ENCODE measurements at regions of chr2 and their contacts with region 1.

Region 1: DNA sequence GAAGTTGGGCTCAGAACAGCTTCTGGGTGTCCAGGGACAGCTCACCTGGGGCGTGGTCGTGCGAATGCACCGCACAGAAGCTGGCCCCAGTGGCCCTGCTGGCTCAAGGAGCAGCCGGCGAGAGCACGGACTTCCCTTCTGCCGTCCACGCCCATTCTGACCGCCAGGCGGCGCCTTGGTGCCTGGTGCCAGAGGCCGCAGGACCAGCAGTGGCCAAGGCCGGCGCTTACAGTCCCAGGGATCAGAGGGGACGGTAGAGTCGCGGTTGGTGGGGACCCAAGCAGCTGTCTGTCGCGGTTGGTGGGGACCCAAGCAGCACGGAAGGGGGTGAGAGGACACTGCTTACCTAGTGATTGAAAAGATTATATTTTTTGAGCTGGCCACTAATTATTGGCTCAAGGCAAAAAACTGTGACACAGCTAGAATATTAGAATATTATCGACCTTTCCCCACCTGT is 25.7 kb downstream of the NPPC start:
- DNase-seq: peak; percentile 84
- H3K4me3 ChIP-seq: no peak overlapping the region
- H3K27ac ChIP-seq: no peak overlapping the region
- H3K4me1 ChIP-seq: no peaks in the 10 kb centered on the region
- H3K27me3 ChIP-seq: peaks cover 11% of the 10 kb centered on the region
- CTCF ChIP-seq: peak; percentile 58 to 83 (median 75)
- EP300 ChIP-seq: no peak
- POLR2A ChIP-seq: no peak

Region 2: GRCh38 chr2:232315049-232315922 is 414.8 kb after region 1 on chr2:
- in situ Hi-C with region 1: loop called in 3 of 4 experiments (anchors 10 to 25 kb)
- intact Hi-C with region 1: no loop called
- DNase-seq: peak; percentile 56
- H3K4me3 ChIP-seq: no peak overlapping the region
- H3K27ac ChIP-seq: peak overlapping the region; percentile 11 to 60 (median 36)
- H3K4me1 ChIP-seq: peaks cover 0 to 29% (median 10%) of the 10 kb centered on the region in 4 donors
- H3K27me3 ChIP-seq: no peaks in the 10 kb centered on the region
- CTCF ChIP-seq: peak in 1 of 5 experiments; percentile 19
- EP300 ChIP-seq: no peak
- POLR2A ChIP-seq: no peak

Region 3: DNA sequence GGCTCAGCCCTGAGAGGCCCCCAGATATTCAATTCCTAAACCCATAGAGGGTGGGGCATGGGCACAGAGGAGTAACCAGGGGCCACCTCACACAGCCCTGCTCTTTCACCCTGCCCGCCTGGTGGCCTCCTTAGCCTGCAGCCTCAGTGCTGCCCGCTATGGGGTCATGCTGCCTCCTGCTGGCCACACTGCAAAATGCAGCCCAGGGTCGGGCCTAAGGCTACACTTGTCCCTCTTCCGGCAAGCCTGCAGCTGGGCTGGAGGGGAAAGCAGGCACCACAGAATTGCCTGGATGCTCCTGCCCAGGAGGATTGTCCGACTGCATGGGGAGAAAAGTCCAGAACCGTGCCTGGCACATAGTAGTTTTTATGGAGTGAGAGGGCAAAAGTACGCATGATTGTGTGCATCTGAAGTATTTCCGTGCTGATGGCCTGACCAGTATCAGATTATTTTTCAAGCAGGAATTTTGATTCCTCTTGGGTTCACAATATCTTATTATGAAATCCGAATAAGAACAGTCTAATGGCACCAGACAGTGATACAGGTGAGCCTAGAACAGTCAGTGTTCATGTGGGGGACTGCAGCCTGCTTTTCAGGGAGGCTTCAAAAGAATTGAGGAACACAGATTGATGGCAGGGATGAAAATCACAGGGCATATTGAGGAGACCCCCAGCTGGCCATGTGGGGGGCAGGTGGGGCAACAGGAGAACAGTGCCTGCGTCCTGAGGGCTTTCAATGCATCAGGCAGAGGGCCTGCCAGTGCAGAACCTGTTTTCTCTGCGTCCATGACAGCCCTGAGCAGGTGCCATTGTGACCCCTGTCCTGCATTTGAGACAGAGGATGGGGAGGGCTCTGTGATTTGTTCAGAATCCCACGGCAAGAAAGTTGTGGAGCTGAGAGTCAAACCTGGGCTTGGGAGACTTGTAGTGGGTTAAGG is 426.9 kb after region 1 on chr2:
- in situ Hi-C with region 1: loop called in 3 of 4 experiments (anchors 10 to 25 kb)
- intact Hi-C with region 1: no loop called
- DNase-seq: peak; percentile 80
- H3K4me3 ChIP-seq: no peak overlapping the region
- H3K27ac ChIP-seq: no peak overlapping the region
- H3K4me1 ChIP-seq: no peaks in the 10 kb centered on the region
- H3K27me3 ChIP-seq: no peaks in the 10 kb centered on the region
- CTCF ChIP-seq: peak; percentile 73 to 96 (median 89)
- EP300 ChIP-seq: no peak
- POLR2A ChIP-seq: no peak

Region 4: GRCh38 chr2:232438951-232439757 is 538.6 kb after region 1 on chr2:
- in situ Hi-C with region 1: loop called in 2 of 4 experiments (anchors 10 to 25 kb)
- intact Hi-C with region 1: loop called (anchors 5 kb)
- DNase-seq: peak; percentile 45
- H3K4me3 ChIP-seq: no peak overlapping the region
- H3K27ac ChIP-seq: no peak overlapping the region
- H3K4me1 ChIP-seq: no peaks in the 10 kb centered on the region
- H3K27me3 ChIP-seq: peaks cover 5% of the 10 kb centered on the region
- CTCF ChIP-seq: peak; percentile 49 to 72 (median 51)
- EP300 ChIP-seq: no peak
- POLR2A ChIP-seq: no peak

Region 5: GRCh38 chr2:232444409-232445148 is 544.1 kb after region 1 on chr2:
- in situ Hi-C with region 1: loop called in 2 of 4 experiments (anchors 10 to 25 kb)
- intact Hi-C with region 1: loop called (anchors 5 kb)
- DNase-seq: peak; percentile 60
- H3K4me3 ChIP-seq: no peak overlapping the region
- H3K27ac ChIP-seq: no peak overlapping the region
- H3K4me1 ChIP-seq: no peaks in the 10 kb centered on the region
- H3K27me3 ChIP-seq: no peaks in the 10 kb centered on the region
- CTCF ChIP-seq: peak; percentile 38 to 70 (median 53)
- EP300 ChIP-seq: no peak
- POLR2A ChIP-seq: no peak

Measured in transverse colon (tissue), 4 donors.